Heart right ventricle (tissue), 16 donors: ENCODE measurements at regions of chr15 and their contacts with region 1.

Region 1: DNA sequence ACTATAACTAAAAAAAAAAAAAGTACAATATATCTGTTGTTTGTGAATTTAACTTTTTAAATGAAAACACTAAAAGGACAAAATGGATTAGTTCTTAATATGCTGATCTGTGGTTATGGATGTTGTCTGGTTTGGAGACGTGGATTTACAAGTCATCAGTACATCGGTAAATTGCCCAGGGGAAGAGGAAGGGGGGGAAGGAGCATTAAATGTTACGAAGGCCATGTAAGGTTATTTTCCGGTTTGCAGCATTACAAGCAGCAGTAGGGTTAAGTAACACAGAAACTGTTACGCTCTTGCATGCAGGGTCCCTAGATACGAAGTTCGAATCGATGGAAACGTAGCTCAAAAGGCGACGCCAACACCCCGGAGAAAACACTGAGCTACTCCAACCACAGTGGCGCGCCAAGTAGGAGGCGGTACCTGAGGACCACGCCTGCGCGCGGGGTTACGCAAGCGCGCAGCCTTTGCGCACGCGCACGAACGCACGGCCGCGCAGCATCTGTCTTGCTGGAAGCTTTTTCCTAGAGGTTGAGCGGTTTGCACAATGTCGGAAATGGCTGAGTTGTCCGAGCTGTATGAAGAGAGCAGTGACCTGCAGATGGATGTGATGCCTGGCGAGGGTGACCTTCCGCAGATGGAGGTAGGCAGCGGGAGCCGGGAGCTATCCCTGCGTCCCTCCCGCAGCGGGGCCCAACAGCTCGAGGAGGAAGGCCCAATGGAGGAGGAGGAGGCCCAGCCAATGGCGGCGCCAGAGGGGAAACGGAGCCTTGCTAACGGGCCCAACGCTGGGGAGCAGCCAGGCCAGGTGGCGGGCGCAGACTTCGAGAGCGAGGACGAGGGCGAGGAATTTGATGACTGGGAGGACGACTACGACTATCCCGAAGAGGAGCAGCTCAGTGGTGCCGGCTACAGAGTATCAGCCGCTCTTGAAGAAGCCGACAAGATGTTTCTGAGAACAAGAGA is at the start of gene EID1:
- DNase-seq: peak; percentile 92 to 94
- ATAC-seq: peak; percentile 99 to 100 (median 100)
- H3K4me3 ChIP-seq: peak within 1 kb of the TSS; percentile 45 to 89 (median 77)
- H3K27ac ChIP-seq: peak within 1 kb of the TSS; percentile 46 to 95 (median 88)
- H3K4me1 ChIP-seq: peaks cover 0 to 28% (median 19%) of the 10 kb centered on the region in 9 donors
- H3K27me3 ChIP-seq: peaks cover 0 to 5% (median 0%) of the 10 kb centered on the region in 7 donors
- CTCF ChIP-seq: peak in 2 of 9 donors; percentile 9 to 12
- total RNA-seq, gene EID1: 174 to 255 (median 225) TPM

Region 2: DNA sequence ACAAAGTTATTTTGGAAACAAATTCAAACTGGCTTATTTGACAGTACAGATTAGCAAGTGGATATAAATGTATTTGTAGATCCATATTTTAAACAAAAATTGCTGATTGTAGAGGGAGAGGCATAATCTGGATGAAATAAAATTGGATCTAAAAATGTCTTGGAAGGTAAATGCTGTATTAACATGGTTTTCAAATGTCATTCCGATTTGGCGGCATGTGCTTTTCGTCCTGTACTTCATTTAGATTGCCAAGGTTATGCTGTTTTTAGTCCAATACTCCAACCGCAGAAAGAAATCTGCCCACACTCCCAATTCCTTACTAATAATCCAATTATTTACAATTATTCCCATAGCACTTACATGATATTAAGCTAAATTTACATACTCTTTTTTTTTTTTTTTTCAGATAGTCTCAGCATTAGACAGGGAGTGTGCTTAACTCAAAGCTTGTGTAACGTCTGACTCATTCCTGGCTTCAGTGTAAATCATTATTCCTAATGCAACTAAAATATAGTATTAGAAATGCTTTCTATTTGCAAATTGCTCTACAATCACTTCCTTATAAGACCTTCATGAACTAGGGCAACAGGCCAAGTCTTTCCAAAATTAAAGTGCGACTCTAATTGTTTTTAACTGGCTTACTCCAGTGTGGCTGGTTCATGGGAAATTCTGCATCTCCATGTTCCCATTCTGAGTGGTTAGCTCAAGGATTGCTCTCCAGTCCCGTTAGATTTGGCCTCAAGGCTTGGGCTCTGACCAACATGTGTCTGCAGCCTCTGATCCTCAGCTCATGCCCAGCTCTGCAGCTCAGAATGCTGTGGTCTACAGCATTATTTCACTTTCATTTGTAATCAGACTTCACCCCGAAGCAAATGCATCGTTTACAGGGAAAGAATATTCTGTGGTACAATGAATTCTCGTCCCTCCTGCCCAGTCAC is 336.3 kb before region 1 on chr15:
- intact Hi-C with region 1: no loop called
- DNase-seq: peak in 1 of 2 donors; percentile 18
- ATAC-seq: peak in 7 of 8 donors; percentile 42 to 73 (median 56)
- H3K4me3 ChIP-seq: peak overlapping the region in 1 of 10 donors; percentile 14
- H3K27ac ChIP-seq: peak overlapping the region in 7 of 10 donors; percentile 2 to 45 (median 21)
- H3K4me1 ChIP-seq: peaks cover 0 to 47% (median 26%) of the 10 kb centered on the region in 9 donors
- H3K27me3 ChIP-seq: no peaks in the 10 kb centered on the region
- CTCF ChIP-seq: no peak

Region 3: DNA sequence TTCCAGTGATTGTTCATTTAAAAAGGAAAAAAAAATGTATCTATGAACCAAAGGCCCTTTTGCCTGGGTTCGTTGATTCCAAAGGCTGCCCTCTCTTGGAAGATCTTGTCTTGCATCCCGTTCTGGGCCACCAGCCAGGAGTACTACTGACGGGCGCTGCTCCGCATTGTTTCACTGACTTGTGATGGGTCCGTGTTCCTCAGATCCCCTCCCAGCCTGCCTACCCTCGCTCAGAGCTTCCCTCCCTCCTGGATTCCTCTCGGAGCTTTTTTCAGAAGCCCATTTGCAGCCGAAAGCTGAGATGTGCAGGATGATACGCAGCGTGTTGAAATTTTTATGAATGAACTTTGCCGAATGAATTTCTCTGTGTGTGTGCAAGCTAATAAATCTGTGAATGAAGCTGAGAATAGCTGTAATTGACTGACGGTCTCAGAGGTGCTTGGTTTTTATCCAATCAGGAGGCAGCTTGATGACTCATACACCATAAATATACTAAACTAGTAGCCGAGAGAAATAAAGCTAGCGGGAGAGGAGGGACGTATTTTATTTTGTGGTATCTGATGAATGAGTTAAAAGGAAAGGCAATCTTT is 85.7 kb after region 1 on chr15 and contains the start of gene SHC4:
- intact Hi-C with region 1: loop called in 6 of 10 experiments (anchors 1 to 5 kb)
- DNase-seq: peak; percentile 61 to 68
- ATAC-seq: peak; percentile 74 to 90 (median 84)
- H3K4me3 ChIP-seq: peak within 1 kb of the TSS; percentile 36 to 72 (median 60)
- H3K27ac ChIP-seq: peak within 1 kb of the TSS in 6 of 10 donors; percentile 13 to 60 (median 29)
- H3K4me1 ChIP-seq: peaks cover 0 to 27% (median 13%) of the 10 kb centered on the region in 9 donors
- H3K27me3 ChIP-seq: peaks cover 0 to 24% (median 0%) of the 10 kb centered on the region in 7 donors
- CTCF ChIP-seq: peak in 6 of 9 donors; percentile 18 to 48 (median 32)
- total RNA-seq, gene SHC4: 1.3 to 4.9 (median 2.2) TPM

Region 4: DNA sequence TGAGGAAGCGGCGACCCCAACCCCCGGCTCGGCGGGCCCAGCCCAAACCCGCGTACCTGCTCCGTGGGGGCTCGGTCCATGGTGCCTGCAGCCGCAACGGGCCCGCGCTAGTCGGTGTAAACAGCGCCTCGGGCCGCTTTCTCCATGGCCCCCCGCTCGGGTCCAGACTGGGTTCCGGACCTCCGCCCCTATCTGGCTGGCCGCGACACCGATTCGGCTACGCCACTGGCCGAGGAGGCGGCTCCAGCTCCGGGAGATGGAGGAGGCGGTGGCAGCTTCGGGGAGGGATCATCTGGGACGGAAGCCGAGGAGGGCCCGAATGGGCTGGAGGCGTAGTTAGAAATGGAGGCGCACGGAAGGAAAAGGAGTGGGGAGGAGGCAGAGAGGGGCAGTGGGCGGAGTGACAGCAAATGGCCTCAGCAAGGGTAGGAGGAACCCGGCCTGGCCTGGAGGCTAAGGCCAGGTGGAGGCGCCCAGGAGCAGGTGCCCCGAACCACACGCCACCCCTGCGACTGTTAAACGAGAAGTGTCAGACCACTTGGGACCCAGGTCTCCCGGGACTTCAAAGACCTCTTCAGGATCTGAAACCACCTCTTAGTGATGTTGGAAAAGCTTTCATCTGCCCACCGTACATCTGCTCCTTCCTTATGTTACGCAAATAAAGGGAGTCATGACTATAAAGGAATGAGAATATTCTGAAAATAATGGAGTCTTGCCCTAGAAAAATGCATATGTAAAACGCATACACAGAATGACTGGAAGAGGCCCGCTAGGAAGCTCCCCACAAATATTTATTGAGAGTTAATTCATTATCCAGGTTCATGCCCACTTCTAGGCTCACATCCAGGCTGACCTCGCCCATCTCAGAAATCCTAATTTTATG is 168.5 kb after region 1 on chr15 and contains the start of gene SECISBP2L:
- intact Hi-C with region 1: loop called in 5 of 10 experiments (anchors 5 to 10 kb)
- DNase-seq: peak; percentile 93 to 96
- ATAC-seq: peak; percentile 97 to 99 (median 99)
- H3K4me3 ChIP-seq: peak within 1 kb of the TSS; percentile 70 to 100 (median 92)
- H3K27ac ChIP-seq: peak within 1 kb of the TSS; percentile 51 to 97 (median 90)
- H3K4me1 ChIP-seq: peaks cover 0 to 45% (median 32%) of the 10 kb centered on the region in 9 donors
- H3K27me3 ChIP-seq: no peaks in the 10 kb centered on the region
- CTCF ChIP-seq: peak in 7 of 9 donors; percentile 19 to 57 (median 37)
- total RNA-seq, gene SECISBP2L: 29.8 to 49.8 (median 44.0) TPM

Region 5: DNA sequence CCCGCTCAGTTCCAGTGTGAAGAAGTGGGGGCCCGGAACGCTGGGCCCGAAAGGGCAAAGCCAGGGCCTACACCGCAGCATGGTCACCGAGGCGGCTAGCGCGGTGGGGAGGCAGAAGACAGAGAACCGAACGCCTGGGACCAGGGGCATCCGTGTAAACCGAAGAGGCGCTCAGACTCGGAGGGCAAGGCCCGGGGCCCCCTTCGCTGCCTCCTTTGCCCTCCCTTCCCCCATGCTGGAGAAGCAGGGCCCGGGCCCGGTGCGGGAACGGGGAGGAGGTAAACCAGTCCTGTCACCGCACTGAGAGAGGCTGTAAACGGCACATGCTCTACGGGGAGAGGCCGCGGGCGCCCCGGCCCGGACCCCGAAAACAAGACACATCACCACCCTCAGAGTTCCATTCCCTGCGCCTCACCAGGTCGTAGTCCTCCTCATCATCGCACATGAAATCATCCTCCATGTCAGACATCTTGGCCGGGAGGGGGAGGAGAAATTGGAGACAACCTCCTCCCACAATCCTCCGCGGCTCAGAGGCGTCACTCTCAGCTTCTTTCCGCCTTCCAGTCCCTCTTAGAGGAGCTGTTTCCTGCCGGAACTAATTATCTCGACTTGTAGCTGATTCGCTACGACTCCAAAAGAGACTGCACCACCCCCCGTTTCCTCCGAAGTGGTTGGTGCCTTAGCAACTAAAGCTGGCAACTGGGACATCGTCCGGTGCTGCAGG is 277.4 kb after region 1 on chr15 and contains the start of gene COPS2:
- intact Hi-C with region 1: loop called in 1 of 10 experiments (anchors 5 kb)
- DNase-seq: peak; percentile 86 to 96
- ATAC-seq: peak; percentile 98 to 99 (median 99)
- H3K4me3 ChIP-seq: peak within 1 kb of the TSS; percentile 84 to 98 (median 92)
- H3K27ac ChIP-seq: peak within 1 kb of the TSS; percentile 45 to 94 (median 88)
- H3K4me1 ChIP-seq: peaks cover 2 to 58% (median 41%) of the 10 kb centered on the region in 9 donors
- H3K27me3 ChIP-seq: no peaks in the 10 kb centered on the region
- CTCF ChIP-seq: peak in 1 of 9 donors; percentile 9
- total RNA-seq, gene COPS2: 71.3 to 91.8 (median 86.8) TPM

Region 6: DNA sequence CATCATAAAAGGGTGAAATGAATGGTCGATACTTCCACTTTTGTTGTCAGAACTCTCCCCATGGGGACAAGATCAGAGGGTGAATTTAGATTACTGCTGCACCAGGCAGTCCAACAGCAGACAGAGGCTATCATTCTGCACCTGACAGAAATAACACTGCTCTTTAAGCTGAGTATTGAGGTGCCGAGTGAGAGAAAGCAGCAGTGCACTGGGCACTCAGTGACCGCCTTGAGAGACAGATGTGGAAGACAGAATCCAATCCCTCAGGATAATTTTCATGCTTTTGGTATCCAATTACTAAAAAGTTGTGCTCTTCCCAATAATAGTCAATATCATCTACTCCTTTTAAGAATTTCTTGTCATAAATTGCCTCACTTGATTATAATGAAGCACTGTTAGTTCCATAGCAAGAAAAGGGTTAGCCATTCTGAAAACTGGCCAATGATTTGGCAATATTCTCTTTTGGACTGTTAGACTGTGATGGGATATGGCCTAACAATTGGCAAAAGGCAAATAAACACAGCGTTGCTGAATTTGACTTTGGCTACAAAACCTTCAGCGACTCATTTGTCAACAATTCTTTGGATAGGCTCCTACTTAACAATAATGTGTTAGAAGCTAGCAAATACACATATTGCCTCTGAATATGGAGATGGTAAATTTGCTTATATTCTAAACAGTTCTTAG is 550.6 kb after region 1 on chr15:
- intact Hi-C with region 1: loop called in 1 of 10 experiments (anchors 5 kb)
- DNase-seq: peak; percentile 29 to 71
- ATAC-seq: peak; percentile 79 to 97 (median 95)
- H3K4me3 ChIP-seq: peak overlapping the region in 8 of 10 donors; percentile 19 to 56 (median 24)
- H3K27ac ChIP-seq: peak overlapping the region; percentile 15 to 81 (median 72)
- H3K4me1 ChIP-seq: peaks cover 0 to 25% (median 8%) of the 10 kb centered on the region in 9 donors
- H3K27me3 ChIP-seq: no peaks in the 10 kb centered on the region
- CTCF ChIP-seq: no peak